PC-3 (cell line): ENCODE measurements at regions of chr6 and their contacts with region 1.

Region 1: DNA sequence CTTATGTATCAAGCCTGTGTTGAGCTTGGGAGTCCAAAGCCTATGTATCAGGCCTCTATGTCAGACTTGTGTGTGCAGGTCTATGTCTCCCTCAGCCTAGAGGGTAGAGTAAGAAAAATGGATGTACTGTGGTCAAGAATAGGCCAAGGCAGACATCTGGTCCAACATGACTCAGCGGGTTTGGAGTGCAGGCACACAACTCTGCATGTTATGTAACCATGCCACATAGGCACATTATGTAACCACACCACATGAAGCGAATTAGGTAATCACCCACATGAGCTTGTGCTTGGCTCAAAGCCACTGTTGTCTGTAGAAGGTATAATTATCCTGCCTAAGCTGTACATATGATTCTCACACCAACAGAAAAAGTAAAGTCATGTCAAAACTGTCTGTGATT is 1190.5 kb upstream of the EYS start:
- DNase-seq: peak; percentile 13
- ATAC-seq: no peak
- H3K4me3 ChIP-seq: no peak overlapping the region
- H3K27ac ChIP-seq: no peak overlapping the region
- H3K4me1 ChIP-seq: no peaks in the 10 kb centered on the region
- H3K27me3 ChIP-seq: no peaks in the 10 kb centered on the region
- CTCF ChIP-seq: no peak

Region 2: GRCh38 chr6:66628917-66629316 is 268.7 kb before region 1 on chr6:
- CTCF ChIA-PET with region 1: interaction called, 11 read pairs
- POLR2A ChIA-PET with region 1: no interaction called
- intact Hi-C with region 1: no loop called
- DNase-seq: no peak
- ATAC-seq: no peak
- H3K4me3 ChIP-seq: no peak overlapping the region
- H3K27ac ChIP-seq: no peak overlapping the region
- H3K4me1 ChIP-seq: no peaks in the 10 kb centered on the region
- H3K27me3 ChIP-seq: no peaks in the 10 kb centered on the region
- CTCF ChIP-seq: no peak

Region 3: GRCh38 chr6:66662196-66662595 is 235.4 kb before region 1 on chr6:
- CTCF ChIA-PET with region 1: no interaction called
- POLR2A ChIA-PET with region 1: no interaction called
- intact Hi-C with region 1: loop called (anchors 2 kb)
- DNase-seq: peak; percentile 52
- ATAC-seq: no peak; the same call in 1 of the 2 replicates
- H3K4me3 ChIP-seq: no peak overlapping the region
- H3K27ac ChIP-seq: no peak overlapping the region
- H3K4me1 ChIP-seq: no peaks in the 10 kb centered on the region
- H3K27me3 ChIP-seq: no peaks in the 10 kb centered on the region
- CTCF ChIP-seq: peak; percentile 60